ENCODE measurements at regions of chr2 and their contacts with region 1.

Region 1: GRCh38 chr2:186518945-186519344 is 32.9 kb downstream of the ZC3H15 start:
- DNase-seq: no peak
- H3K4me3 Mint-ChIP-seq: no peak overlapping the region
- H3K27ac Mint-ChIP-seq: no peak overlapping the region
- H3K4me1 Mint-ChIP-seq: no peaks in the 10 kb centered on the region
- H3K27me3 Mint-ChIP-seq: no peaks in the 10 kb centered on the region
- CTCF ChIP-seq: no peak

Region 2: DNA sequence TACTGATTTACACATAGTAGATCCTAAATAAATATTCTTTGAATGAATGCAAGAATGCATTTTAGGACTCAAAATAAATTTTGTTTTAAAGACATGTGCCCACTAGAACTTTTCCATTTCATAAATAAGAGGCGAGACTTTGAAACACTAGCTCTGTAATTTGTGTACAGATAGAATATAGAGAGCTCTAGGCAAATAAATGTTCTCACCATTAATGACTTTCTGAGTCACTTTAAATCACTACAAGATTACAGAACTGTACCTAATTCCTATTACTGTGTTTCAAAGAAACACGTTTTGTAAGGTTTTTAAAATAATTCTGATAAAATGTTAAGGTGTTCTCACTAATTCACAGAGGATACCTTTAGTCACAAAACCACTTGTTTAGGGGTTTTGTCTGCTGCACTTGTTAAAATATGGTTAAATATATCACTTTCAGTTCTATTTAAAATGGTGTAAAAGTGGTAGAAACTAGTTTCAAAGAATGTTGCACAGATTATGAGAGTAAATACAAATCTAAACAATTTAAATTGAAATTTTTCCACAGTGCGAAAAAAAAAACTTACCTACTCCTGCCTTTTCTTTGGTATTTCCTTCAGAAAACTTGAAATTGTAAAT is 191.6 kb before region 1 on chr2:
- CTCF ChIA-PET with region 1: no interaction called
- POLR2A ChIA-PET with region 1: no interaction called
- intact Hi-C with region 1: no loop called
- DNase-seq: no peak
- H3K4me3 Mint-ChIP-seq: no peak overlapping the region
- H3K27ac Mint-ChIP-seq: no peak overlapping the region
- H3K4me1 Mint-ChIP-seq: peaks cover 7% of the 10 kb centered on the region
- H3K27me3 Mint-ChIP-seq: no peaks in the 10 kb centered on the region
- CTCF ChIP-seq: no peak

Region 3: DNA sequence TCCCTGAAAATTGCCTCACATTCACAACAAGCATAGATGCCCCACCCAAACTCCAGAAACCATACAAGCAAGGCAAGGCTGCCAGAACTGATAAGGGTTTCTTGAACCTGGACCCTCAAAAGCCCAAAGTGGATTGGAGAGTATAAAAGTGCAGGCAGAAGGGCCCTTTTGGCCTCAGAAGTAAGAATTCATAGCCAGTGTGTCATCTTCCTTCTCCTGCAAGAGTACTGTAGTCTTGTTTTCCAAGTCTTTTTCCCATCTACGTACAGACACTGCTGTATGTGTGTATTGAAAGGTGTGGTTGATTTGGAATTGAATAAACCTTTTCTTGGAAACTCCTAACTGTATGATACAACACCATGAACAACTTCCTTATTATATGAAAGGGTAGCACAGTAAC is 13.9 kb after region 1 on chr2:
- CTCF ChIA-PET with region 1: interaction called, 3 read pairs
- POLR2A ChIA-PET with region 1: interaction called, 10 read pairs
- intact Hi-C with region 1: no loop called
- DNase-seq: no peak
- H3K4me3 Mint-ChIP-seq: no peak overlapping the region
- H3K27ac Mint-ChIP-seq: no peak overlapping the region
- H3K4me1 Mint-ChIP-seq: no peaks in the 10 kb centered on the region
- H3K27me3 Mint-ChIP-seq: no peaks in the 10 kb centered on the region
- CTCF ChIP-seq: no peak

Measured in MCF 10A (cell line).